Endothelial cell of umbilical vein (primary cell): ENCODE measurements at regions of chr13 and their contacts with region 1.

Region 1: DNA sequence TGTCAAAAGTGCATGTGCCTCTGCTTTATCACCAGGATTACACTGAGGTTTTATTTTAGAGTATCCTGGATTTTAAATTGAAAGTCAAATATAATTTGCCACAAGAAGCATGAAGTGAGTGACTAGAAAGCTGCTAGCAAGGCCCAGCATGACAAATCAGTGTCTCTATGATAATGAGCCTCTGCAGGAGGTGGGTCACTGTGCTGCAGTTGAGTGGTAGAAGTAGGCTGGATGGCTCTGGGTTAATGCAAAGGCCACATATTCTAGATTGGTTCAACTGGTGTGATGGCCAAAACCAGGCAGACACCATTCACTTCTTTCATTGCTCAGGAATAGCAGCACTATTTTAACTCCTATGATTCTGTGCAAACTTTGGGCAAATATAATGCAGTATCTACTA is 491.5 kb downstream of the OLFM4 start:
- DNase-seq: no peak
- H3K4me3 ChIP-seq: no peak overlapping the region
- H3K27ac ChIP-seq: no peak overlapping the region
- H3K4me1 ChIP-seq: no peaks in the 10 kb centered on the region
- H3K27me3 ChIP-seq: no peaks in the 10 kb centered on the region
- CTCF ChIP-seq: no peak
- POLR2A ChIP-seq: no peak

Region 2: DNA sequence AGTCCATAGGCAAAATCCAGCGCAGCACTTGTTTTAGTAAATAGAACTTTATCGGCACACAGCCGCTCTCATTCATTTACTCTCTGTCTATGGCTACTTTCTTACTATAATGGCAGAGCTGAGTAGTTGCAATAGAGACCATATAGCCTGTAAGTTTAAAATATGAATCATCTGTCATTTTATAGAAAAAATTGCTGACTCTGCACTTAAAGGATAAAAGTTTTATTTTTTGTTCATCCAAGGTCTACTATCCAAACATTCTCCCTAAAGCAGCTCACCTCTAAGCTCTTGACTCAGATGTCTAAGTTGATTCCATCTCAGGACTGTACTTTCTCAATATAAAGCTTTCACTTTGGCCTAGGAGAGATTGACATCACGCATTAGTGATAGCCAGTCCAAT is 334.2 kb after region 1 on chr13:
- CTCF ChIA-PET with region 1: no interaction called
- POLR2A ChIA-PET with region 1: no interaction called
- dilution Hi-C with region 1: no loop called
- intact Hi-C with region 1: loop called (anchors 5 kb)
- DNase-seq: no peak
- H3K4me3 ChIP-seq: no peak overlapping the region
- H3K27ac ChIP-seq: no peak overlapping the region
- H3K4me1 ChIP-seq: no peaks in the 10 kb centered on the region
- H3K27me3 ChIP-seq: no peaks in the 10 kb centered on the region
- CTCF ChIP-seq: no peak
- POLR2A ChIP-seq: no peak